ENCODE measurements at regions of chr2 and their contacts with region 1.

Region 1: DNA sequence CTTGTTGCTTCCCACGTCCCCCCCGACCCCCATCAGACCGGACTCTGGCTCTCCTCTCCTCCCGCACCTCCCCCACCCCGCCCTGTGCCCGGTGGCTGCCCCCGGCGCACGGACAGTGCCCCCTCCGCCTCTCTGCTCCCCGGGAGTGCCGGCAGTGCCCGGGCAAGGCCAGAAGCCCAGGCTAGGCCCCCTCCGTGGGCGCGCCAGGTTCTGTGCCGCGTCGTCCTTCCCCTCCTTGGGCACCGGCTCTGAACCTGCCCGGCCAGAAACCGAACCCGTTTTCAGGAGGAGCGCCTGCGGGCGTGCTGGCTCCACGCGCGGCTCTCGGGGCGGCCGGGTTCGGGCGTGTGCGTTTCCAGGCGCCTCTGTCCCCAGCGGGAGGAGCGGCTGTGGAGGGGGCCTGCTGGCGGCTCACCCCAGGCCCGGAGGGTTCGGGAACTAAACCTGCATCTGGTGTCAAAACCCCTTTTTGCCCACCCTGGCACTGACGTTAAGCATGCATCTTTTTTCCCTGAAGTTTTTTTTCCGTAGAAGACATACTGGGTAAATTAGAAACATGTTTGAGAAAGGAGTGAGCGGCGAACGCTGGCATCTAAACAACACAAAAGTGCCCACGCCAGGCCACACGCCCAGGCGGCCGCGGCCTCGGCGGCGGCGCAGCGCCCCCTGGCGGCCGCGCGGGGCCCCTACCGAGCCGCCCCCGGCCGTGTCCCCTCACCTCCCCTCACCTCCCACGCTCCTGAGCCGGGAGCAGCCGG is 123.9 kb upstream of the SLC1A4 start:
- DNase-seq: peak; percentile 53 to 68
- ATAC-seq: peak; percentile 75 to 93 (median 87)
- H3K4me3 ChIP-seq: peak overlapping the region; percentile 51 to 99 (median 79)
- H3K27ac ChIP-seq: peak overlapping the region; percentile 78 to 97 (median 91)
- H3K4me1 ChIP-seq: peaks cover 0 to 60% (median 8%) of the 10 kb centered on the region in 9 donors
- H3K27me3 ChIP-seq: no peaks in the 10 kb centered on the region
- CTCF ChIP-seq: peak in 8 of 9 donors; percentile 50 to 99 (median 67)

Region 2: GRCh38 chr2:64523666-64524603 is 341.3 kb before region 1 on chr2 and contains the start of gene AFTPH:
- intact Hi-C with region 1: loop called in 8 of 10 experiments (anchors 2 to 5 kb)
- DNase-seq: peak; percentile 99
- ATAC-seq: peak; percentile 99 to 100 (median 100)
- H3K4me3 ChIP-seq: peak within 1 kb of the TSS; percentile 74 to 98 (median 92)
- H3K27ac ChIP-seq: peak within 1 kb of the TSS; percentile 75 to 98 (median 94)
- H3K4me1 ChIP-seq: peaks cover 0 to 49% (median 34%) of the 10 kb centered on the region in 9 donors
- H3K27me3 ChIP-seq: no peaks in the 10 kb centered on the region
- CTCF ChIP-seq: peak in 1 of 9 donors; percentile 13
- total RNA-seq, gene AFTPH: 9.8 to 12.8 (median 11.0) TPM

Region 3: DNA sequence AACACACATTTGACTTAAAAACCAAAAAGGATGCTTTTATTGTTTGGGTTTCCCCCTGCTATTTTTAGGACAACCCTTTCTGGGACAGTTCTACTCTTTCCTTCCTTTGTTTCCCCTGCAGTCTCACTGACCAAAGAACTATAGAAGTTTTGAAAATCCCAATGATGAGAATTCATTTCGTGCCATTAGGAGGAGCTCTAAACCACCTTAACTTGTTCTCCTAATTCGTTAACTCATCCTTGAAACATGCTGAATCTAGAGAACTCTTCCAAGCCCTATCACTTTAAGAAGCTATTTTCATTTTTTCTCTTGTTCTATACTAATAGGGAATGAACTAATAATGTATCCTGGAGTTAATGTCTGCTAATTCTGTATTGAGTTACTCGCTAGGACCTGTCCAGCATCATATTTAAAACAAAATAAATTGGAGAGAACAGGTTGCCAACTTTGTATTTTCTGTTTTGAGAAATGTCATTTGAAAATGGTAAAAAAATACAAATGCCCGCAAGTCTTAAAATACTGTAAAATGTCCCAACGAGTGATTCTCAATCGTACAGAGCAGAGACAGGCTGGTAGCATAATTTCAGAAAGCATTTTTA is 278.3 kb before region 1 on chr2:
- intact Hi-C with region 1: loop called in 9 of 10 experiments (anchors 2 to 5 kb)
- DNase-seq: no peak
- ATAC-seq: peak in 6 of 8 donors; percentile 55 to 77 (median 65)
- H3K4me3 ChIP-seq: no peak overlapping the region
- H3K27ac ChIP-seq: no peak overlapping the region
- H3K4me1 ChIP-seq: peaks cover 0 to 13% (median 8%) of the 10 kb centered on the region in 9 donors
- H3K27me3 ChIP-seq: no peaks in the 10 kb centered on the region
- CTCF ChIP-seq: peak; percentile 27 to 80 (median 65)

Region 4: GRCh38 chr2:64601034-64601754 is 264.1 kb before region 1 on chr2:
- intact Hi-C with region 1: loop called in 5 of 10 experiments (anchors 5 kb)
- DNase-seq: no peak
- ATAC-seq: no peak
- H3K4me3 ChIP-seq: no peak overlapping the region
- H3K27ac ChIP-seq: no peak overlapping the region
- H3K4me1 ChIP-seq: peaks cover 0 to 11% (median 0%) of the 10 kb centered on the region in 9 donors
- H3K27me3 ChIP-seq: no peaks in the 10 kb centered on the region
- CTCF ChIP-seq: no peak

Region 5: DNA sequence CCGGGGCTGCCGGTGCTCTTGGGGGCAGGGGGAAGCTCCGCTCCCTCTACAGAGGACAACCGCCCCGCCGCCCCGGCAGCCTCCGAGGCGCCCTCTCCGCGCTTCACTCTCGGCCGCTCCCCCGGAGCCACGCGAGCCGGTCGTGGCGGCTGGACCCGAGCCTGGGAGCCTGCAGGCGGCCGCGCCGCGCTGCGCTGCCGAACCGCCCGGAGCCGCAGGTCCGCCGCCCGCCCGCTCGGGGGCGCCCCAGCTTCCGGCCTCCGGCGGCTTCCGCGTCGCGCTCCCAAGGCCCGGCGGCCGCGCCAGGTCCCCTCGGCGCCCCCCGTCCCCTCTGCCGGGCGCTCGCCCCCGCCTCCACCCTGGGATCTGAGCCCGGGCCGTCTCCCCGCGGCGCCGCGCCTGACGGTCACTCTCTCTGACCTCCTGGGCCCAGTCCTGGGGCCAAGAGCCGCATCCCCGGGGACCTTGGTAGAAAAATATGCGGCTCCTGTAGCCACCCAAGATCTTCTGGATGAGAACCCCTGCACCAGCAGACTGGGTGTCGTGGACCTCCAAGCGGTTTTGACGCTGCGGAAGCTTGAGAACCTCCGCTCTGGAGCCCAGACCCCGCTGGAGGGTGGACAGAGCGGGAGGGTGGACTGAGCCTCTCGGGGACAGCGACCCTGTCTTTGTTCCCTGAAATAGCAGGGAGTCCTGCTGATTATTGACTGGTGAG is 255.9 kb before region 1 on chr2:
- intact Hi-C with region 1: loop called in 5 of 10 experiments (anchors 5 kb)
- DNase-seq: peak; percentile 44 to 77
- ATAC-seq: peak; percentile 46 to 85 (median 72)
- H3K4me3 ChIP-seq: peak overlapping the region; percentile 47 to 79 (median 66)
- H3K27ac ChIP-seq: peak overlapping the region in 9 of 10 donors; percentile 66 to 92 (median 83)
- H3K4me1 ChIP-seq: peaks cover 0 to 34% (median 15%) of the 10 kb centered on the region in 9 donors
- H3K27me3 ChIP-seq: no peaks in the 10 kb centered on the region
- CTCF ChIP-seq: peak in 6 of 9 donors; percentile 18 to 72 (median 52)

Region 6: GRCh38 chr2:64653349-64654062 is 211.7 kb before region 1 on chr2 and contains the start of gene SERTAD2:
- intact Hi-C with region 1: loop called in 5 of 10 experiments (anchors 2 to 5 kb)
- DNase-seq: peak; percentile 90 to 92
- ATAC-seq: peak; percentile 89 to 93 (median 92)
- H3K4me3 ChIP-seq: peak within 1 kb of the TSS; percentile 65 to 99 (median 87)
- H3K27ac ChIP-seq: peak within 1 kb of the TSS; percentile 92 to 100 (median 99)
- H3K4me1 ChIP-seq: peaks cover 0 to 75% (median 57%) of the 10 kb centered on the region in 9 donors
- H3K27me3 ChIP-seq: no peaks in the 10 kb centered on the region
- CTCF ChIP-seq: peak in 6 of 9 donors; percentile 4 to 31 (median 24)
- total RNA-seq, gene SERTAD2: 11.3 to 20.9 (median 16.6) TPM

Region 7: GRCh38 chr2:64767670-64768468 is 97.4 kb before region 1 on chr2:
- intact Hi-C with region 1: loop called in 5 of 10 experiments (anchors 5 to 10 kb)
- DNase-seq: peak; percentile 89 to 94
- ATAC-seq: peak; percentile 95 to 99 (median 96)
- H3K4me3 ChIP-seq: peak overlapping the region; percentile 26 to 75 (median 70)
- H3K27ac ChIP-seq: peak overlapping the region; percentile 95 to 99 (median 98)
- H3K4me1 ChIP-seq: peaks cover 0 to 36% (median 17%) of the 10 kb centered on the region in 9 donors
- H3K27me3 ChIP-seq: no peaks in the 10 kb centered on the region
- CTCF ChIP-seq: peak in 2 of 9 donors; percentile 10 to 35

Region 8: DNA sequence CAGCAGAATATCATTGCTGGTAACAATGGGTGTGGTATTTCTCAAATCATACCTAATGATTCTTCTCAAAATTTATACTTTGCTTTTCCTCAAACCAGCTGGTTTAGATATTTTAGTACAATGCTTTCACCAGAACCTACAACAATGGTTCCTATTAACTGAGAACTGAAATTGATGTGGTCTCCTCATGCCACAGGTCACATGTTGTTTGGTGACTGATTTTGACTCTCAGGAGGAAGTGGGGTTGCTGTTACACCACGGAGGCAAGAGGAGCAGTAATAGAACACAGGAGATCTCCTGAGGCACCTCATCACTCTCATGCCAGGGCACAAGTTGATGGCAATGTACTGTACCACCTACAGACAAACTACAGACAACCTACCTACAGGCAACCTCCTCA is 187.9 kb after region 1 on chr2:
- intact Hi-C with region 1: no loop called
- DNase-seq: no peak
- ATAC-seq: no peak
- H3K4me3 ChIP-seq: no peak overlapping the region
- H3K27ac ChIP-seq: peak overlapping the region in 1 of 10 donors; percentile 48
- H3K4me1 ChIP-seq: peaks cover 0 to 36% (median 18%) of the 10 kb centered on the region in 9 donors
- H3K27me3 ChIP-seq: no peaks in the 10 kb centered on the region
- CTCF ChIP-seq: no peak

Measured in heart right ventricle (tissue), 16 donors.